ENCODE measurements at regions of chr7 and their contacts with region 1.

Region 1: GRCh38 chr7:91660734-91661355 is 219.7 kb downstream of the MTERF1 start:
- DNase-seq: no peak
- ATAC-seq: no peak
- H3K4me3 ChIP-seq: no peak overlapping the region
- H3K27ac ChIP-seq: no peak overlapping the region
- H3K4me1 ChIP-seq: no peaks in the 10 kb centered on the region
- H3K27me3 ChIP-seq: no peaks in the 10 kb centered on the region
- CTCF ChIP-seq: no peak

Region 2: DNA sequence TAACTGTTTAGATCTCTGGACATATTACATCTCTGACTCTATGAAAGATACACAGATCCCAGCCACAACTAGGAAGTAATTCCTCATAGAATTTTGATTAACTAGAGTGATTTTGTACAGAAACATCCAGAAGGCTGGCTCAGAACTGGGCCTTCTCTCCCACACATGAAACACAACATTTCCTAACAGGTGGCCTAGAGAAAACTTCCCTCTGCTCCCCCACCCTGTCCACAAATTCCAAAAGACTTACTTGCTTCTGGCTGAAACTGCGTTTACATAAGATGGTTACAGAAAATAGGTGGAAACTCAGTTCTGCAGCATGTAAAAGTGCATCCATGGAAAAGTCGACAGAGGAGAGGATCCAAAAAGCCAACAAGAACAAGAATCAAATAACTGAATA is 263.7 kb before region 1 on chr7:
- intact Hi-C with region 1: no loop called
- DNase-seq: no peak
- ATAC-seq: no peak
- H3K4me3 ChIP-seq: no peak overlapping the region
- H3K27ac ChIP-seq: no peak overlapping the region
- H3K4me1 ChIP-seq: no peaks in the 10 kb centered on the region
- H3K27me3 ChIP-seq: no peaks in the 10 kb centered on the region
- CTCF ChIP-seq: no peak

Region 3: DNA sequence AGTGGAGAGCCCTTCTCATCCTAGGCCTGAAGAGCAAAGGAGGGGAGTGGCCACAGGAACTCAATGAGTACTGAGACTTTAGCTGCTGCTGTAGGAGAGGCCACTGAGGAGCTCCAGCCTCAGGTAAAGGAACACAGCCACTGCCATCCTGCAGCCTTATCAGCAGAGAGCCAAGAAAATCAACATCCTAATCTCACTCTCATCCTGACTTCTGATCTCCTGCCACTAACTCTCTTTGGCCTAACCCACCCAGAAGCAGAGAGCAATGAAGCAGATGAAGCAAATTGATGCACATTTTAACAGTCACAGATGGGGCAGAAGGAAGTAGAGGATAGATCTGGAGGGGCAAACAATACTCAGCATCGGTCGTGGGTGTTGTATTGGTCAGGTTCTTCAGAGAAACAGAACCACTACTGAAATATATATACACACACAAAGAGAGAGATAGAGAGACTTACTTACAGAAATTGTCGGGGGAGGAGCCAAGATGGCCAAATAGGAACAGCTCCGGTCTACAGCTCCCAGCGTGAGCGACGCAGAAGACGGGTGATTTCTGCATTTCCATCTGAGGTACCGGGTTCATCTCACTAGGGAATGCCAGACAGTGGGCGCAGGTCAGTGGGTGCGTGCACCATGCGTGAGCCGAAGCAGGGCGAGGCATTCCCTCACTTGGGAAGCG is 77.9 kb before region 1 on chr7:
- intact Hi-C with region 1: no loop called
- DNase-seq: no peak
- ATAC-seq: no peak
- H3K4me3 ChIP-seq: no peak overlapping the region
- H3K27ac ChIP-seq: no peak overlapping the region
- H3K4me1 ChIP-seq: no peaks in the 10 kb centered on the region
- H3K27me3 ChIP-seq: no peaks in the 10 kb centered on the region
- CTCF ChIP-seq: no peak

Region 4: GRCh38 chr7:91636129-91636724 is 24.6 kb before region 1 on chr7:
- intact Hi-C with region 1: loop called in 1 of 2 experiments (anchors 2 kb)
- DNase-seq: no peak
- ATAC-seq: no peak
- H3K4me3 ChIP-seq: no peak overlapping the region
- H3K27ac ChIP-seq: no peak overlapping the region
- H3K4me1 ChIP-seq: no peaks in the 10 kb centered on the region
- H3K27me3 ChIP-seq: no peaks in the 10 kb centered on the region
- CTCF ChIP-seq: peak; percentile 37

Measured in psoas muscle (tissue), 8 donors.